Breast epithelium (tissue), 4 donors: ENCODE measurements at regions of chr9 and their contacts with region 1.

Region 1: GRCh38 chr9:71604197-71605063 is 163.9 kb downstream of the CEMIP2 start:
- DNase-seq: peak; percentile 28 to 69
- H3K4me3 ChIP-seq: no peak overlapping the region
- H3K27ac ChIP-seq: no peak overlapping the region
- H3K4me1 ChIP-seq: no peaks in the 10 kb centered on the region
- H3K27me3 ChIP-seq: no peaks in the 10 kb centered on the region
- CTCF ChIP-seq: peak; percentile 57 to 65 (median 64)
- POLR2A ChIP-seq: no peak

Region 2: DNA sequence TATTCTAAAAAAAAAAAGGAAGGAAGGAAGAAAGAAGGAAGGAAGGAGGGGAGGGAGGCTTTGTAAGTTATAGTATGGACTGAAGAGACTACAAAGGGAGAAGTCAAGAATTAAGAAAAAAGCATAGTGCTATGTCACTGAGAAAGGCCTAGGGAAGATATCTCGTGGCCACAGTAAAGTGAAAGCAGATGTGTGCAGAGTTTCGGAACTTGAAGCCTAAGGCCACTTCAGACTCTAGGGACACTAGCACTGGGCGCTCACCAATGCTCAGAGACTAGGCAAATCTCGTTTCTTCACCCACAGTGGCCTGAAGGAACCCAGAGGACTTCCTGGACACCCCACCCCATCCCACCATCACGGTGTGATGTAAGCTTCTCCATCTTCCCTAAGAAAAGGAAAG is 301.7 kb before region 1 on chr9:
- intact Hi-C with region 1: loop called (anchors 10 kb)
- DNase-seq: no peak
- H3K4me3 ChIP-seq: no peak overlapping the region
- H3K27ac ChIP-seq: no peak overlapping the region
- H3K4me1 ChIP-seq: no peaks in the 10 kb centered on the region
- H3K27me3 ChIP-seq: no peaks in the 10 kb centered on the region
- CTCF ChIP-seq: no peak
- POLR2A ChIP-seq: no peak

Region 3: DNA sequence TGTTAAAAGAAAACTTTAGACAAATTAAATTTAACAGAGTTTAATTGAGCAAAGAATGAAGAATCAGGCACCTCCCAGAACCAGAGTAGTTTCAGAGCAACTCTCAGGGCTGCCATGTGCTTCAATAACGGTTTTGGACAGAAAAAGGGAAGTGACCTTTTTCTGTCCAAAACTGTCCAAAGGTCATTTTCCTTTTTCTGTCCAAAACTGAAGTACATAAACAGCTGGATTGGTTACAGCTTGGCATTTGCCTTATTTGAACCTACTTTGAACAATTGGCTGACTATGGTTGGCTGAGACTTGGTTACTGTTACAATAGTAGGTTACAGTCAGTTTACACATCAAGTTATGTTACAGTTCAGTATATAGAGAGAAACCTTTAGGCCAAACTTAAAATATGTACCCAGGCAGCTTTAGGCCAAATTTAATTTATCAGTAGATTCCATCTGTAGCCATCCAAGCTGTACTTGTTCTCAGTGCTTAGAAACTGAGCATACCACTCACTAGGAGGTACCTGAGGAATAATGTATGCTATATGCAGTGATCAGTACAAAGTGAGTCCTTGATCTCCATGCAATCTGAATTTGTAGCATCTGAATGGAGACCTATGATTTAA is 351.0 kb after region 1 on chr9:
- intact Hi-C with region 1: no loop called
- DNase-seq: no peak
- H3K4me3 ChIP-seq: no peak overlapping the region
- H3K27ac ChIP-seq: no peak overlapping the region
- H3K4me1 ChIP-seq: no peaks in the 10 kb centered on the region
- H3K27me3 ChIP-seq: no peaks in the 10 kb centered on the region
- CTCF ChIP-seq: no peak
- POLR2A ChIP-seq: no peak